Naive thymus-derived CD4-positive, alpha-beta T cell (primary cell): ENCODE measurements at regions of chr11 and their contacts with region 1.

Region 1: DNA sequence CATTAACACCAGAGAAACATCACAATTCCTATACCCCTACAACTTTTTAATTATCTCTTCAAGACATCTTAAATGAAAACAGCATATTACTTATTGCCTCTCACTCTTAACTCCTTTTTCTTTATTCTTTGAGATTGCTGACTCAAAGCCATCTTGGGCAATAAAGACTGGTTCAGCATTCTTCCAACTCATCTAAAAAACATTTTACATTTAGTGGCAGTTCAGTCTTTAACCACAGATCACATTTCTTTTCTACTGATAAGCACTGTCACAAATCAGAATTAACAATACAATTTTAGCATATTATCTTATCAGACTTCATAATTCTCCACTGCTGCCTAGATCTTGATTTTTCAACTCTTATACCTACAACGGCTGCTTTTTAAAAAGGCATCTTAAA is 34.0 kb downstream of the SIK3 start:
- DNase-seq: no peak
- ATAC-seq: no peak
- H3K4me3 ChIP-seq: no peak overlapping the region
- H3K4me3 Mint-ChIP-seq: peak overlapping the region in 5 of 10 donors; percentile 2 to 27 (median 6)
- H3K27ac ChIP-seq: no peak overlapping the region
- H3K27ac Mint-ChIP-seq: peak overlapping the region in 3 of 9 donors; percentile 2 to 58 (median 7)
- H3K4me1 ChIP-seq: peaks cover 0 to 28% of the 10 kb centered on the region in 2 donors
- H3K4me1 Mint-ChIP-seq: peaks cover 41 to 81% (median 62%) of the 10 kb centered on the region in 7 donors
- H3K27me3 ChIP-seq: no peaks in the 10 kb centered on the region
- H3K27me3 Mint-ChIP-seq: no peaks in the 10 kb centered on the region

Region 2: DNA sequence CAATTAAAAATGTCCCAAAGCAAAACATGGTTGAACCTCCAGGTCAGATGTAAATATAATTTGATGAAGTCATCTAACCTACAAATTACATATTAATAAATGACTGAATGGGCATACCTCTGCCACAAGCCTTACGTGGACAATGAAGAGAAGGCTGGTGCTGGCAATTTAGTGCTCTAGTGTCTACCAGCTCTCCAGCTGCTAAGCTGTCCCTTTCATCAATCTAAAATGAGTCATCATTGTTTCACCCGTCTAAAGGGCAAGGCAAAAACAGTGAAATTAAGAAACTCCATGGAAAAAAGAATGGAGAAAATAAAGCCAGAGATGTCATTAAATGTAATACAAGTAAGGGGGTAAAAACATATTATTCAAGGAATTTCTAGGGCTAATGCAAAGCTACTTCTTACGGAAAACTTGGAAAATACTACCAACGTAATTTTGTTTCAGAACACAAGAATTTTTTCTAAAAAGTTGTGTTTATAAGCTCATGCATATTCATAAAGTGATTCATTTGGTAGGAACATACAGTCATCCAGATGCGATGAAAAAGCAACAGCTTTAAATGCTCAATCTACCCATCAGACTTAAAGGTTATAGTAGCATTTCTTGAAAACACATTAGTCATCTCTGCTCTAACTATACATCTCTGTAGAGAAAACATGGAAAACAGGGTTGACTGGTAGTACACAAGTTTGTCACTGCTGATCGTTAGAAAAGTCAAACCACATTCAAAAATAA is 37.5 kb before region 1 on chr11:
- CTCF ChIA-PET with region 1: no interaction called
- POLR2A ChIA-PET with region 1: no interaction called
- intact Hi-C with region 1: loop called in 1 of 2 experiments (anchors 5 kb)
- DNase-seq: no peak
- ATAC-seq: peak; percentile 21
- H3K4me3 ChIP-seq: no peak overlapping the region
- H3K4me3 Mint-ChIP-seq: peak overlapping the region in 1 of 10 donors; percentile 19
- H3K27ac ChIP-seq: no peak overlapping the region
- H3K27ac Mint-ChIP-seq: peak overlapping the region in 2 of 9 donors; percentile 50 to 70
- H3K4me1 ChIP-seq: peaks cover 18 to 25% of the 10 kb centered on the region in 2 donors
- H3K4me1 Mint-ChIP-seq: peaks cover 42 to 79% (median 56%) of the 10 kb centered on the region in 7 donors
- H3K27me3 ChIP-seq: no peaks in the 10 kb centered on the region
- H3K27me3 Mint-ChIP-seq: no peaks in the 10 kb centered on the region

Region 3: GRCh38 chr11:117076941-117077691 is 12.8 kb after region 1 on chr11:
- CTCF ChIA-PET with region 1: no interaction called
- POLR2A ChIA-PET with region 1: interaction called, 4 read pairs
- intact Hi-C with region 1: loop called in 1 of 2 experiments (anchors 2 kb)
- DNase-seq: no peak
- ATAC-seq: no peak
- H3K4me3 ChIP-seq: no peak overlapping the region
- H3K4me3 Mint-ChIP-seq: no peak overlapping the region
- H3K27ac ChIP-seq: no peak overlapping the region
- H3K27ac Mint-ChIP-seq: no peak overlapping the region
- H3K4me1 ChIP-seq: peaks cover 11 to 41% of the 10 kb centered on the region in 2 donors
- H3K4me1 Mint-ChIP-seq: peaks cover 32 to 71% (median 54%) of the 10 kb centered on the region in 7 donors
- H3K27me3 ChIP-seq: no peaks in the 10 kb centered on the region
- H3K27me3 Mint-ChIP-seq: no peaks in the 10 kb centered on the region